Heart left ventricle (tissue), 16 donors: ENCODE measurements at regions of chr9 and their contacts with region 1.

Region 1: DNA sequence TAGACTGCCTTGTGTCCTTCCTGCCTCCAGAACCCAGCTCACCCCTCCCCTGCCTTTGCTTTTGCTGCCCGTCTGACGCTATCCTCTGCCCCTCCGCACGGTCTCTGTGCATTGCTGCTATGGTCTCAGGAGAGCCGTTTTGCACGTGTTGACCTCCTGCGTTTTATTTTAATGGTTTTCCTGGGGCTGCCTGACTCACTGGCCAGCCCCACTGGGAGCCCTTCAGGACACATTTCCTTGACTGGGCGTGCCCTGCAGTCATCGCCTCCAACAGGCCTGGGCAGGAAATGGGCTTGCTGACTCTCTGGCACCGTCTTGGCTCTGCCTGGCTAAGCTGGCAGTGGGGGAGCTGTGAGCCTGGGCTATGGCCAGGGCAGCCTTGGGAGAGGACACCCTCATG is 17.9 kb upstream of the ASS1 start:
- DNase-seq: peak; percentile 46 to 70 (median 66)
- ATAC-seq: peak in 3 of 4 donors; percentile 41 to 77 (median 60)
- H3K4me3 ChIP-seq: no peak overlapping the region
- H3K27ac ChIP-seq: peak overlapping the region in 4 of 12 donors; percentile 4 to 67 (median 39)
- H3K4me1 ChIP-seq: peaks cover 0 to 36% (median 14%) of the 10 kb centered on the region in 12 donors
- H3K27me3 ChIP-seq: no peaks in the 10 kb centered on the region
- CTCF ChIP-seq: no peak
- POLR2A ChIP-seq: no peak

Region 2: DNA sequence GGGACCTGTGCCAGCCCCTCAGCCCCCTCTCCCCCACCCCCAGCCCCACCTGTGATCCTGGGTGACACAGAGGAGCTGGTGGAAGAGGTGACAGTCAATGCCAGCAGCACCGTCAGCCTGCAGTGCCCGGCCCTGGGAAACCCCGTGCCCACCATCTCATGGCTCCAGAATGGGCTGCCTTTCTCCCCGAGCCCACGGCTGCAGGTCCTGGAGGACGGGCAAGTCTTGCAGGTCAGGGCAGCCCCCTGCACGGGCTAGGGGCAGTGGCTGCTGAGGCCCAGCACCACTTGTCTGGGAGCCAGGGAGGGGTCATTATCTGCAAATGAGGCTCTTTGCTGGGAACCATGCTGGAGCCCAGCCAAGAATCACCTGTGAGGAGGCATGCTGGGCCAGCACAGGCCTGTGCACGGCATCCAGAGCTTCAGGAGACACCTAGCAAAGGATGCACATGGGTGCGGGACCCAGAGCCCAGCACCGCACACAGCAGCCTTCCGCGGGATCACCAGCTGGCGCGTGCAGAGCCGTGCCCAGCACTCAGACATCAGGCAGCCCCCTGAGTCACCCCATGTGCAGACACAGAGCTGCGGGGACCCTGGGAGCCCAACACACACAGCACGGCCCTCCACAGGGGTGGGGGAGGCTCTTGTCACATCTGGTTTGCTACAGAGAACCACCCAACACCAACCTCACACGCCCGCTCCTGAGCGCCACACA is 44.1 kb before region 1 on chr9:
- intact Hi-C with region 1: no loop called
- DNase-seq: no peak
- ATAC-seq: no peak
- H3K4me3 ChIP-seq: no peak overlapping the region
- H3K27ac ChIP-seq: no peak overlapping the region
- H3K4me1 ChIP-seq: no peaks in the 10 kb centered on the region
- H3K27me3 ChIP-seq: no peaks in the 10 kb centered on the region
- CTCF ChIP-seq: no peak
- POLR2A ChIP-seq: no peak

Region 3: DNA sequence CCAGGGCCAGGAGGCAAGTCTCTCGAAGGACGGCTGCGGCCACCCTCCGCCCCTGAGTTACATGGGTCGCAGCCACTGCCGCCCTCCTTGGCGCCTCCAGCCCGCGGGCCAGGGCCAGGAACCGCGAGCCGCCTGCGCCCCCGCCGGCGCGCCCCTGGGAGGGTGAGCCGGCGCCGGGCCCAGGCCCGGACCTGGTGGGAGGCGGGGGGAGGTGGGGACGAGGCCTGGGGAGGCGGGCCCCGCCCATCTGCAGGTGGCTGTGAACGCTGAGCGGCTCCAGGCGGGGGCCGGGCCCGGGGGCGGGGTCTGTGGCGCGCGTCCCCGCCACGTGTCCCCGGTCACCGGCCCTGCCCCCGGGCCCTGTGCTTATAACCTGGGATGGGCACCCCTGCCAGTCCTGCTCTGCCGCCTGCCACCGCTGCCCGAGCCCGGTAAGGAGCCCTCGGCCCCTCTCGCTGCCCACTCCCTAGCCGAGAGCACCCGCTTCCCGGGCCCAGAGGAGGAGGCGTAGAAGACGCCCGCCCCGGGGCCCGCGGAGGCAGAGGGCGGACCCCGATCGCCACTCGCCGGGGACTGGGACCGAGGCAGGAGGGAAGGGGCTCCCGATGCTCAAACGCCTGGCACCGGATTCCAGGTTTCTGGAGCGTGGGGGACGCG is 17.8 kb after region 1 on chr9 and contains the start of gene ASS1:
- intact Hi-C with region 1: loop called in 1 of 10 experiments (anchors 2 kb)
- DNase-seq: peak; percentile 82 to 91 (median 86)
- ATAC-seq: peak; percentile 15 to 76 (median 62)
- H3K4me3 ChIP-seq: peak within 1 kb of the TSS; percentile 58 to 82 (median 72)
- H3K27ac ChIP-seq: peak within 1 kb of the TSS; percentile 80 to 96 (median 91)
- H3K4me1 ChIP-seq: peaks cover 5 to 54% (median 36%) of the 10 kb centered on the region in 12 donors
- H3K27me3 ChIP-seq: peaks cover 0 to 22% (median 0%) of the 10 kb centered on the region in 9 donors
- CTCF ChIP-seq: no peak
- POLR2A ChIP-seq: peak in 1 of 2 donors; percentile 65
- total RNA-seq, gene ASS1: 31.5 to 154 (median 60.5) TPM

Region 4: GRCh38 chr9:130461218-130461630 is 34.3 kb after region 1 on chr9:
- intact Hi-C with region 1: no loop called
- DNase-seq: peak; percentile 42 to 81 (median 48)
- ATAC-seq: peak; percentile 44 to 57 (median 50)
- H3K4me3 ChIP-seq: no peak overlapping the region
- H3K27ac ChIP-seq: no peak overlapping the region
- H3K4me1 ChIP-seq: peaks cover 0 to 28% (median 0%) of the 10 kb centered on the region in 12 donors
- H3K27me3 ChIP-seq: no peaks in the 10 kb centered on the region
- CTCF ChIP-seq: peak; percentile 86 to 99 (median 94)
- POLR2A ChIP-seq: no peak